CD14-positive monocyte (primary cell): ENCODE measurements at regions of chrX and their contacts with region 1.

Region 1: DNA sequence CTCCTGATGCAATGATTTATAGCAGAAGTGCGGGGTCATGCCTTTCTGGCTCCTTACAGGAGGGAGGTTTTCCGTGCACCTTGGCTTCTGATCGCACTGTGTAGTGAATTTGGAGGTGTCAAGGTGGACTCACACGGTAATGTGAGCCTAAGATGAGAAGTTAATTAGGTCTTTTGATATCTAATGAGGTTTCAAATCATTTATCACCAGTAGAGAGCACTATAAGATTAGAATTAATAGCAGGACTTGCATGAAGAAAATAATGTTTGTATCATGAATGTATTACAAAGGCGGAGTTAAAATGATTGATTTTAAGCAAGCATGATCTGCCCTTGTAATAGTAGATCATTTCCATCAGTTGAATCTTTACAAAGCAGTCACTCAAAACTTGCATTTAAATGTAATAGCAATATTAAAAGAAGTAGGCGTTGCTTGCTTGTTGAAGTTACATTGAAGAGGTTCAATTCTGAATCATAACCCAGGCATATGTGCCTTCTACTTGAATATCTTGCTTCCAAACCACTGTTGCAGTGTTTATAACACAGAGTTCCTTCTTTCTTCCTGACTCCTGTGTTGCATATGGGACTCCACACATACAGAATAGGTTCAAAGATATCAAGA is 152.1 kb downstream of the FMR1NB start:
- DNase-seq: no peak
- H3K4me3 ChIP-seq: no peak overlapping the region
- H3K4me3 Mint-ChIP-seq: no peak overlapping the region
- H3K27ac ChIP-seq: no peak overlapping the region
- H3K27ac Mint-ChIP-seq: peak overlapping the region in 1 of 7 donors; percentile 45
- H3K4me1 ChIP-seq: no peaks in the 10 kb centered on the region
- H3K4me1 Mint-ChIP-seq: no peaks in the 10 kb centered on the region
- H3K27me3 ChIP-seq: no peaks in the 10 kb centered on the region
- H3K27me3 Mint-ChIP-seq: peaks cover 0 to 1% (median 0%) of the 10 kb centered on the region in 3 donors
- CTCF ChIP-seq: peak; percentile 33

Region 2: DNA sequence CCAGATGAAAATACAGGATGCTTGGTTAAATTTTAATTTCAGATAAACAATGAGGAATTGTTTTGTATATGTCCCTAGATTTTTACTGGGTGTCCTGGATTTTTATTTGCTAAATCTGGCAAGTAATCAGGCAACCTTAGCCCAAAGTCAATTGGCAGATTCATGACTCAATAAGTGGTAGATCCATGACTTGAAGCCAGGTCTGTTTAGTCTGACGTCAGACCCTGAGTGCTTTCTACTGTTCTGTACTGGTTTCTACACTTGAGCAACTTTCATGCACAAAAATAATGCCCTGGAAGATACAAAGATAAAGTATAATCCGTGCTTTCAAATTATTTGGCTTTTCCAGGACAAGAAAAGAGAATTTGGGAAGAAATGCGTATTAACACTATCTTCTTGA is 77.2 kb before region 1 on chrX:
- intact Hi-C with region 1: no loop called
- DNase-seq: no peak
- H3K4me3 ChIP-seq: no peak overlapping the region
- H3K4me3 Mint-ChIP-seq: no peak overlapping the region
- H3K27ac ChIP-seq: no peak overlapping the region
- H3K27ac Mint-ChIP-seq: no peak overlapping the region
- H3K4me1 ChIP-seq: no peaks in the 10 kb centered on the region
- H3K4me1 Mint-ChIP-seq: no peaks in the 10 kb centered on the region
- H3K27me3 ChIP-seq: no peaks in the 10 kb centered on the region
- H3K27me3 Mint-ChIP-seq: peaks cover 3 to 8% (median 3%) of the 10 kb centered on the region in 3 donors
- CTCF ChIP-seq: no peak

Region 3: GRCh38 chrX:149286940-149287349 is 1153.7 kb after region 1 on chrX:
- intact Hi-C with region 1: loop called in 1 of 2 experiments (anchors 5 kb)
- DNase-seq: peak; percentile 3 to 26 (median 12)
- H3K4me3 ChIP-seq: no peak overlapping the region
- H3K4me3 Mint-ChIP-seq: no peak overlapping the region
- H3K27ac ChIP-seq: no peak overlapping the region
- H3K27ac Mint-ChIP-seq: no peak overlapping the region
- H3K4me1 ChIP-seq: no peaks in the 10 kb centered on the region
- H3K4me1 Mint-ChIP-seq: no peaks in the 10 kb centered on the region
- H3K27me3 ChIP-seq: no peaks in the 10 kb centered on the region
- H3K27me3 Mint-ChIP-seq: peaks cover 0 to 2% (median 2%) of the 10 kb centered on the region in 3 donors
- CTCF ChIP-seq: peak; percentile 69

Region 4: DNA sequence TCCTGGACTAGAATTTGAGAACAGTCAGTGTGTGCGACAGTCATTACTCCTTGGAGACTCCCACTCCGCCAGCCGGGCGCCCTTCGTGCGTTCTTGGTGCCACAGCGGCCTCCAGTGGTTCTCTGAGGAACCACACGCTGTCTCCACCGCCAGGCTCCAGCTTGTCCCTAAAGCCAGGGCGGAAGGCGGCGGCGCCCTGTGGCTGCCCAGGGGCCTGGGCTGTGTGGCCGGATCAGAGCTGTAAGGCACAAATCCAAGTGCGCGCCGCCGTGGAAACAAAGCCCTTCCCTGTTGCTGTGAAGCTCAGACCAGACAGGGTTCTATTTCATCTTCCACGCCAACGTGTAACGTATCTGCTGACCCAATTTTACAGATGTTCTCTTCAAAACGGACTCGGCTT is 1337.7 kb after region 1 on chrX:
- intact Hi-C with region 1: loop called in 1 of 2 experiments (anchors 10 kb)
- DNase-seq: peak; percentile 27 to 49 (median 42)
- H3K4me3 ChIP-seq: no peak overlapping the region
- H3K4me3 Mint-ChIP-seq: no peak overlapping the region
- H3K27ac ChIP-seq: no peak overlapping the region
- H3K27ac Mint-ChIP-seq: no peak overlapping the region
- H3K4me1 ChIP-seq: no peaks in the 10 kb centered on the region
- H3K4me1 Mint-ChIP-seq: peaks cover 2% of the 10 kb centered on the region
- H3K27me3 ChIP-seq: no peaks in the 10 kb centered on the region
- H3K27me3 Mint-ChIP-seq: peaks cover 0 to 12% (median 6%) of the 10 kb centered on the region in 3 donors
- CTCF ChIP-seq: peak; percentile 75